Upper lobe of right lung (tissue), 1 donor: ENCODE measurements at regions of chr12 and their contacts with region 1.

Region 1: GRCh38 chr12:108562348-108563135 is at the start of gene ISCU:
- DNase-seq: peak; percentile 99
- ATAC-seq: peak; percentile 94
- H3K4me3 ChIP-seq: peak within 1 kb of the TSS; percentile 90
- H3K27ac ChIP-seq: peak within 1 kb of the TSS; percentile 94
- H3K4me1 ChIP-seq: peaks cover 49% of the 10 kb centered on the region
- H3K27me3 ChIP-seq: no peaks in the 10 kb centered on the region
- CTCF ChIP-seq: no peak
- total RNA-seq, gene ISCU: 138 TPM

Region 2: GRCh38 chr12:108618079-108618952 is 55.8 kb after region 1 on chr12:
- intact Hi-C with region 1: loop called (anchors 5 kb)
- DNase-seq: peak; percentile 89
- ATAC-seq: peak; percentile 85
- H3K4me3 ChIP-seq: no peak overlapping the region
- H3K27ac ChIP-seq: no peak overlapping the region
- H3K4me1 ChIP-seq: peaks cover 23% of the 10 kb centered on the region
- H3K27me3 ChIP-seq: no peaks in the 10 kb centered on the region
- CTCF ChIP-seq: peak; percentile 99